ENCODE measurements at regions of chr1 and their contacts with region 1.

Region 1: DNA sequence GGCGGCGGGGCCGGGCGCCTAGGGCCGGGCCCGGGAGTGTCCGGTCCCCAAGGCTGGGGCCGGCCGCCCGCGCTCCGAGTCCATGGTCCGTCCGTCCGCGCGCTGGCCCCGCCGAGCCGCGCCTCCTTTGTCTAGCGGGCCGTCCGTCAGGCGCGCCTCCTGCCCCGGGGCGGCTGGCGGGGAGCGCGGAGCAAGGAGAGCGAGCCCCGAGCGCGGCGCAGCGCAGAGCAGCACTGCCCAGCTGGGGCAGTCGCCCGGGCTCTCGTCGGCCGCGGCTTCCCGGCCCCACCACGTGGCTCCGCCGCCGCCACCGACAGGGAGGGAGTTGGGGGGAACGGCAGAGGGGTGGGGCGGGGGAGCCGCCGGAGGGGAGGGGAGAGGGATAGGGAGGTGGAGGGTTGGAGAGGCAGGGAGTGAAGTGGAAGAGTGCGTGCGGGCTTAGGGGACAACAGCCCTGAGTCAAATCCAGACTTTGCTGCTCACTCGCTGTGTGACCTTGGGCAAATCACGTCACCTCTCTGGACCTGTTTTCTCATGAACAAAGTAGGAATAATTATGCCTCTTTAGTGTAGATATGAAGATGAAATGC is at the start of gene NKAIN1:
- DNase-seq: no peak
- total RNA-seq, gene NKAIN1: 0.28 TPM in 1 of 2 donors, not detected in the other

Region 2: DNA sequence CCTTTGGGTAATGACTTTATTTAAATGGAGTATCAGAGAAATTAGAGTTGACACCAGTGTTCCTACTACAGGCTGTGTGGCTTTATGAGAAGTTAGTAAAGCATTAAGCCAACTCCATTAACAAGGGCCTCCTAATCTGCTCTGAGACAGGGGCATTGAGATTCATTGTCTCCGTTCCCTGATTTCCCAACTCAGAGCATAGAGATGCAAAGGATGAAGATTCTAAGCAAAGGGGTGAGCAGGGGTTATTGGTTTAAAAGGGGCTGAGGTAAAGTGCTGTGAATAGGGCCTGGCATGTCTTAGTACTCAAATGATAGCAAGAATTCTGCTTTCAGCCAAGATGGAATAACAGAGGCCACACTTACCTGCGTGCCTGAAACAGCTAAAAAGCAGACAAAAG is 1575.0 kb before region 1 on chr1:
- intact Hi-C with region 1: loop called in 1 of 2 experiments (anchors 5 kb)
- DNase-seq: no peak

Region 3: DNA sequence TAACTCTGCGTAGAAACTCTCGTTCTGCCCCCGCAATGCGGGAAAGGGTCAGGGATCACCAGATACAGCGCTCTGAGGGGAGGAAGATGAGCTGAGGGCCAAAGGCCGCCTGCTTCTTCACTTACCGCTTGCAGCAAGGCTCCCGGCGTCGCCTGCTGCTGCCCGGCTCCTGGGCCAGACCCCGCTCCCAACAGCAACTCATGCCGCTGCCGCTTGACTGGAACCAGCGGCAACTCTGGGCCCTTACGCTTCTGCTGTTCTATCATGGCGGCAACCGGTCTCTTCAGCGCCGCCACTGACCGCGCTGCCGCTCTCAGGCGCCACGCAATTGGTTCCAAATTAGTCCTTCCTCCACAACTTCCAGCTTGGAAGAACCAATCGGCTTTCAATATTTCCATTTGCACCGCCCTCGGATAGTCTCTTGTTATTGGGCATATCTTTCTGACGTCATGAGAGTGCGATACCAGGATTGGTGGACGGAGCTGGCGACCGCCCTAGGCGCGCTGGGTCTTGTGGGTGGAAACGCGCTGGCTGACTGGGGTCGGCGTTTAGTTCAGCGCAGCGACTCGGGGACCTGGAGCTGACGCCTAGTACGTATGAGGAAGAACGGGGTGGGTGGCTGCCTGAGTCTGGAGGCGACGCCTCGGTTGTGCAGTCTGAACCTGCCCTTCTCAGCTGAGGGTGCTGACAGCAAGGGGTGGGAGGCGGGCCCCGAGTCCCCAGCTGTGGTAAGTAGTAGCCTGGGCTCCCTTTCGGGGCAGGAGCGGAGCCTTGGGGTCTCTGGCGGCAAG is 56.9 kb after region 1 on chr1 and contains the starts of genes SNRNP40 and ZCCHC17:
- intact Hi-C with region 1: no loop called
- DNase-seq: peak; percentile 97
- total RNA-seq, gene SNRNP40: 28.6 to 32.6 TPM
- total RNA-seq, gene ZCCHC17: 18.7 to 20.3 TPM